ENCODE measurements at regions of chr10 and their contacts with region 1.

Region 1: GRCh38 chr10:19819419-19820033 is 3.3 kb downstream of the PLXDC2 start:
- DNase-seq: peak; percentile 76
- H3K4me3 ChIP-seq: peak overlapping the region in 1 of 3 experiments; percentile 71
- H3K27ac ChIP-seq: peak overlapping the region; percentile 29
- H3K4me1 ChIP-seq: peaks cover 15% of the 10 kb centered on the region
- H3K27me3 ChIP-seq: no peaks in the 10 kb centered on the region
- CTCF ChIP-seq: peak; percentile 68 to 91

Region 2: DNA sequence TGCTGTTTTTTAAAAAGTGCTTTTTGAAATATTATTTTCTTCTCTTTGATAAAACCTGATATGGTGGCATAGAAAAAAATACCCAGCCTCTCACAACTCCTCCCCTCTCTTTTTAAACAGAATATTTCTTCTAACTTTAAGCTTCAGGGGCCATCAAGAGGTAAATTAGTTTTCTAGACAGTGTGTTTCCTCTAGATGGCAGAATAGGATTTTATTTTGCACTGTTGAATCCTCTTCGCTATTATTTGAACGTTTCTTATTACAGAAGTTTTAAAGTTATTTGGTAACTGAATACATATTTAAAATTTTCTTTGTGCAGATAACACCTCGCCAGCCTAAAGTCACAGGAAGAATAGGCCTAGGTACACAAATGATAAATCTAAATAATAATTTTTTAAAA is 1130.0 kb before region 1 on chr10:
- CTCF ChIA-PET with region 1: no interaction called
- dilution Hi-C with region 1: no loop called
- in situ Hi-C with region 1: no loop called
- intact Hi-C with region 1: loop called (anchors 10 kb)
- DNase-seq: no peak
- H3K4me3 ChIP-seq: no peak overlapping the region
- H3K27ac ChIP-seq: no peak overlapping the region
- H3K4me1 ChIP-seq: no peaks in the 10 kb centered on the region
- H3K27me3 ChIP-seq: no peaks in the 10 kb centered on the region
- CTCF ChIP-seq: peak; percentile 39 to 56

Region 3: DNA sequence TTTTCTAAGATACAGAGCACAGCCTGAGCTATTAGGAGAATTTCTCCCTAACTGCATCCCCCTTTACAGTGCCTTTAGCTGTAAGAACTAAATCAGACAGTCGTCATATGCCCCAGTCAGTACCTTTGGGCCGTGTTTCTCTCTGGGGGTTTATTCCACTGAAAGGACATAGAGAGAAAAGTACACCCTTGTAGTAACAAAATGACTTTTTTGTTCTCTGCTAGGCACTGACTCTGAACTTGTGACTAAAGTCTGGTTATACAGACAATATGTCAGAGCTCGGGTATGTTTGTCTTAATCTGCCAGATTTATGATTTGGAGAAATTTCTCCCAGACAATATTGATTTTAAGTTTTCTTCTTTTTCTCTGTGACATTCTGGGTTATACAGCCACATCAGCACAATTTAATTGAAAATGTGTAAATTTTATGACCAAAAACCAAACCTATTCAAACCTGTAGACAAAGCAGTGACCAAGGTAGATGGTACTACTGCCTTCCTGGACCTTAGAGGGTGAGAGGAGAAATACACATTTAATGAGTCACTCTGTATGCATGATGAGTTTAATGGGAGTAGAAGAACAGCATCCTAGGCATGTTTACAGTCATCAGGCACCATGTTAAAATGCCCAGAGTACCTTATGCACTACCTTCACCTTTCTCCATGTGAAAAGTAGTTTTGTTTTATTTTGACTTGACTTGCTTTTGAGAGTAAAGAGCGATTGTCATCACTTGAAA is 159.4 kb before region 1 on chr10:
- CTCF ChIA-PET with region 1: no interaction called
- dilution Hi-C with region 1: no loop called
- in situ Hi-C with region 1: no loop called
- intact Hi-C with region 1: loop called (anchors 1 kb)
- DNase-seq: peak; percentile 41
- H3K4me3 ChIP-seq: no peak overlapping the region
- H3K27ac ChIP-seq: no peak overlapping the region
- H3K4me1 ChIP-seq: peaks cover 8% of the 10 kb centered on the region
- H3K27me3 ChIP-seq: no peaks in the 10 kb centered on the region
- CTCF ChIP-seq: no peak

Region 4: GRCh38 chr10:19845503-19846368 is 26.2 kb after region 1 on chr10:
- CTCF ChIA-PET with region 1: no interaction called
- dilution Hi-C with region 1: no loop called
- in situ Hi-C with region 1: no loop called
- intact Hi-C with region 1: no loop called
- DNase-seq: peak; percentile 73
- H3K4me3 ChIP-seq: no peak overlapping the region
- H3K27ac ChIP-seq: peak overlapping the region; percentile 42
- H3K4me1 ChIP-seq: peaks cover 22% of the 10 kb centered on the region
- H3K27me3 ChIP-seq: no peaks in the 10 kb centered on the region
- CTCF ChIP-seq: no peak

Region 5: DNA sequence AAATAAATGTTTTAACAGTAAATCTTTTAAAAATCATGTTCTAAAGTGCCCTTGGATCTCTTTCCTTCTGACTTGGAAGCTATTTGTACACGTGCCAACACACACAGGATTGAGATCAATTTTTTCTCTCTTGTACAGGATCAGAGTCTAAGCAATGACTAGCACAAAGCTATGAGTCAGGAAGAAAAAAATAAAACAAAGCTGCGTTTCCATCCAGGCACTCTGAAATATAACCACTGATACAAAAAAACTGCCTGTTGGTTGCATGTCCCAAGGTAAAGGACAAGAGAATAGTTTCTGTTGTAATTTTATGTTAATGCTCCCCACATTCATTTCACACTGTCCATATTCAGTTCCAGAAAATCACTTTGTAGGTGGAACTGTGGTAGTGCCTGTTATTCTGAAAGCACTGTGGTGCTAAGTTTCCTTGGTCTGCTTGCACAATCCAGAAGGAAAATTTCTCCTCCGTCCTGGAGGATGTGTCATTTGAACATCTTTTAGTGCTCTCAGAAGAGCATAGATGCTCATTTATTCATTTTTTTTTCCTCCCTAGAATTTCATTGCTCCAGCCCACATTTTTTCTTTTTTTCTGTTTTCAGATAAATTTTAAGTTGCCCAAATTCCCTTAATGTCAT is 110.1 kb after region 1 on chr10:
- CTCF ChIA-PET with region 1: no interaction called
- dilution Hi-C with region 1: no loop called
- in situ Hi-C with region 1: no loop called
- intact Hi-C with region 1: loop called (anchors 1 kb)
- DNase-seq: peak; percentile 80
- H3K4me3 ChIP-seq: no peak overlapping the region
- H3K27ac ChIP-seq: peak overlapping the region; percentile 80
- H3K4me1 ChIP-seq: peaks cover 43% of the 10 kb centered on the region
- H3K27me3 ChIP-seq: no peaks in the 10 kb centered on the region
- CTCF ChIP-seq: no peak

Region 6: DNA sequence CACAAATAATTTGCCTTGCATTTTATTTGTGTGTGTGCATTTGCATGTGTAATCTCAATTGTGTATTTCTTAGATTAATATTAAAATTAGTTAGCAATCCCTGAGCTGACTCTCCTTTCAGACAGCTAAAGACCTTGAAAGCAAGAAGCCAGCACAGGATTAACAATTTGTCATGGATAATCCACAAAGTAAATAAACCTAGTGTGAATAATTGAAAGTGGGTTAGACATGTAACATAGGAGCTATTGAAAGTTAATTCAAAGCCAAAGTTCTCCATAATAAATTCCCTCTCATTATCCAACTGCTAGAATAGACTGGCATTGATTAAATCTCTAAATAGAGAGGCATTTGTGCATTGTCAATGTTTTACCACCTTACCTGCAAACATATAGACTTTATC is 322.8 kb after region 1 on chr10:
- CTCF ChIA-PET with region 1: no interaction called
- dilution Hi-C with region 1: no loop called
- in situ Hi-C with region 1: no loop called
- intact Hi-C with region 1: loop called (anchors 5 kb)
- DNase-seq: no peak
- H3K4me3 ChIP-seq: no peak overlapping the region
- H3K27ac ChIP-seq: no peak overlapping the region
- H3K4me1 ChIP-seq: no peaks in the 10 kb centered on the region
- H3K27me3 ChIP-seq: no peaks in the 10 kb centered on the region
- CTCF ChIP-seq: no peak

Region 7: GRCh38 chr10:20276127-20276979 is 456.8 kb after region 1 on chr10:
- CTCF ChIA-PET with region 1: no interaction called
- dilution Hi-C with region 1: no loop called
- in situ Hi-C with region 1: no loop called
- intact Hi-C with region 1: loop called (anchors 2 kb)
- DNase-seq: peak; percentile 96
- H3K4me3 ChIP-seq: no peak overlapping the region
- H3K27ac ChIP-seq: peak overlapping the region; percentile 34
- H3K4me1 ChIP-seq: peaks cover 23% of the 10 kb centered on the region
- H3K27me3 ChIP-seq: no peaks in the 10 kb centered on the region
- CTCF ChIP-seq: no peak

Region 8: DNA sequence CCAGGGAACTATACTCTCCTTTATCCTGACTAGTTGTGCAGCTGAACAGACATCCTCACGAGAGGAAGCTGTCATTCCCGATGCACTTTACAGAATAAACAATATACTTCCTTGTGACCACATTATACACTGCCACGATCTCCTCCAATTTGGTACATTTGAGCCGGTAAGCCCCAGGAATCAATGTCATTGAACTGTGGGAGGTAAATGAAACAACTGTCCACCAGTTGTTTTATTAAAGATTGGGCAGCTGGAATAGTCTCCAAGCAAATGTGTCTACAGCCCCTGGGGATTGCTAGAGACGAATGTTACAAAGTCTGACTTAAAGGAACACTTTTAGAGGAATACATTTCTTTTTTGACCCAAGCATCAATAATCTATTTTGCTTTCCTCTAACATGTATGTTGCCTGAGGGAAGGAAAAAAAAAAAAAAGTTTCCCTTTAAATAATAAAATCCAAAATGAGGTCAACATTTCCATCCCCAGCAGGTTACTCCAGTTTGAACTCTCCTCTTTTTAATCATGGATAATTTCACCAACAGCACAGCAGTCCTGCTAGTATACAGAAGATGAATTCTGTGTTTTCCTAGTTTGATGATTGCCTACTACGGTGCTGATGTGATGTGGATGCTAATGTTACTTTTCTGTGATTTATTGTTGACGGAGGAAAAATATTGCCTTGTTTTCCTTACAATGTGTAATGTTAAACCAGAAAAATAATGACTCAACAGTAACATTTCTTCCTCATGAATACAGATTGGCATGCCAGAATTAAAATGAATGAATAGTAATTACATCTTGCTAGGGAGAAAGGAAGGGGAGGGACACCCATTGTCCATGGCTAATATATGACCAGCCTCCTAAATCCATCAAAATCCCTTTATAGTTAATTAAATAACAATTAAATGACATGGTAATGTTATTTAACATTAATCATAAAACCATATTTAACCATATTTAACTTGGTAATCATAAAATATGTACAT is 716.7 kb after region 1 on chr10:
- CTCF ChIA-PET with region 1: no interaction called
- dilution Hi-C with region 1: no loop called
- in situ Hi-C with region 1: no loop called
- intact Hi-C with region 1: no loop called
- DNase-seq: no peak
- H3K4me3 ChIP-seq: no peak overlapping the region
- H3K27ac ChIP-seq: no peak overlapping the region
- H3K4me1 ChIP-seq: no peaks in the 10 kb centered on the region
- H3K27me3 ChIP-seq: no peaks in the 10 kb centered on the region
- CTCF ChIP-seq: no peak

Region 9: GRCh38 chr10:20839904-20840303 is 1020.4 kb after region 1 on chr10:
- CTCF ChIA-PET with region 1: no interaction called
- dilution Hi-C with region 1: no loop called
- in situ Hi-C with region 1: no loop called
- intact Hi-C with region 1: loop called (anchors 2 kb)
- DNase-seq: no peak
- H3K4me3 ChIP-seq: no peak overlapping the region
- H3K27ac ChIP-seq: peak overlapping the region; percentile 12
- H3K4me1 ChIP-seq: peaks cover 13% of the 10 kb centered on the region
- H3K27me3 ChIP-seq: no peaks in the 10 kb centered on the region
- CTCF ChIP-seq: no peak